H1 (cell line): ENCODE measurements at regions of chr6 and their contacts with region 1.

Region 1: GRCh38 chr6:132259070-132259469 is 142.2 kb downstream of the MOXD1 start:
- DNase-seq: no peak
- H3K4me3 ChIP-seq: no peak overlapping the region
- H3K27ac ChIP-seq: no peak overlapping the region
- H3K4me1 ChIP-seq: no peaks in the 10 kb centered on the region
- H3K27me3 ChIP-seq: no peaks in the 10 kb centered on the region
- CTCF ChIP-seq: peak in 2 of 3 experiments; percentile 27 to 33; a peak in 2 of 4 replicates
- EP300 ChIP-seq: no peak
- POLR2A ChIP-seq: no peak
- RAD21 ChIP-seq: peak; percentile 48 to 59

Region 2: DNA sequence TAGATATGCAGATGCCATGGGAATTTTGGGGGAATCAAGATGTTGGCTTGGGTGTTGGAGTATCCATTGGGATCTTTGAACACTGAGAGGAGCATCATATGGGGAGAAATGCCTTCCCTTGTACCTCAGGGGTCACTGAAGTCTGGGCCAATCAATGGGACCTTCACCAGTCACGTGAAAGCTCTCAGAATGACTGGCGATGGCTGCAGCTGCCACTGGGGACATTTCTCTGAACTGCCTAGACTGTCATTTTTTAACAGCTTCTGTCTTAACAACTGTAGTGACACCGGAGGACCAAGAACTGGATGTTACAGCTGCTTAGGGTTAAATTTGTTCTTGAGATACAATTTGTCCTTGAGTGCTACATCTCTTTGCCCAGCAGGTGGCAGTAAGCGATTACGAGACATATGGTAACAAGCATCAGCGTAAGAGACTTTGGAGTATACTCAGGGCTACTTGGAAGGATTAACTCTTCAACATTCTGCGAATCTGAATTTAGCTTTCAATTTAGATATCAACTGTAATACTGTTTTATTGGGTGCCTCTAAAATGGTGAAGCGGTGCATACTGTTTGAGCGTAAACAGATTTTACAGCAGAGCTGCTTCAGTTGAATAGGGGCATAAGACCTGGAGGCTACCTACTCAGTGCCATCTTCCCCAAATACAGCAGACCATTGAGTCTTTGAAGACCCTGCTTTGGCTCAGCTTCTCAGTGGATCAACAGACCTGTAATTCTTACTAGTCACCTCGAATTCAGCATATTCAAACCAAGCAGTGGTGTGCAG is 343.9 kb before region 1 on chr6:
- CTCF ChIA-PET with region 1: interaction called, 12 read pairs
- POLR2A ChIA-PET with region 1: no interaction called
- DNase-seq: no peak
- H3K4me3 ChIP-seq: no peak overlapping the region
- H3K27ac ChIP-seq: no peak overlapping the region
- H3K4me1 ChIP-seq: no peaks in the 10 kb centered on the region
- H3K27me3 ChIP-seq: no peaks in the 10 kb centered on the region
- CTCF ChIP-seq: peak in 2 of 3 experiments; percentile 48 to 71; a peak in 3 of 4 replicates
- EP300 ChIP-seq: no peak
- POLR2A ChIP-seq: peak; percentile 19 to 84; a peak in 2 of 3 replicates
- RAD21 ChIP-seq: peak; percentile 49 to 64

Region 3: DNA sequence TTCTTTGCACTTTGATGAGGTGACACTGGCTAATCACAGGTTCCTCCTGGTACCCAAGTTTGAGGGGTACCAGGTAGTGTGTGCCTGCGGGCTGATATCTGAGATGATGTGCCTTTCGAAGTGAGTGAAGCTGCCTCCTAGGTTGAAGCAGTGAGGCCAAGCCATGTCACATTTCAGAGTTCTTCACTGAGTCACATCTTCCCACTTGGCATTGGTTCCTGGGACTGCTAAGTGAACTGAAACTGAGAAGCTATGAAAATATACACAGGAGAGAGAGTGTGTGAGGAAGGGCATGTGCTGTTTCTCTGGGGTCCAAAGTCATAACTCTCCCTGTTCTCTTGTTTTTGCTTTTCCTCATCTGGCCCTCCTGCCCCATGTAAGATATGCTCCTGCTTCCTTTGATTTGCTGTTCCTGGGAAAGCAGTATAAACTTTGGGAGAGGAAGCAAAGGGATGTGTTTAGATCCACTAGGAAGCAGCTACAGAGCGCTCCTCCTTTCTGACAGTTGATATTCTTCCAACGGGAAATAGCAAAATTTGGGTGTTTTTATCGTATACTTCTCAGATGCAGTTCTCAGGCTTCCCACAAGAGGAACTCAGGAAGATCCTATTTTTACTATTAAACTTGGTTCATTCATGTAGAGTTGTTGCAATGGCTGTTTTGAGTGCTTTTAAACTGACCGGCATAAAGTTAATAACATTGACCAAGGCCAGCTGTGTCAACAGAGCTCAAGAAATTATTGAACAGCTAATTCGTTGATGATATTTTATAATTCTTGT is 11.5 kb before region 1 on chr6:
- CTCF ChIA-PET with region 1: interaction called, 20 read pairs
- POLR2A ChIA-PET with region 1: no interaction called
- DNase-seq: no peak
- H3K4me3 ChIP-seq: no peak overlapping the region
- H3K27ac ChIP-seq: no peak overlapping the region
- H3K4me1 ChIP-seq: peaks cover 0 to 4% (median 0%) of the 10 kb centered on the region in 4 experiments; a peak in 2 of 7 replicates
- H3K27me3 ChIP-seq: no peaks in the 10 kb centered on the region
- CTCF ChIP-seq: peak in 1 of 3 experiments; percentile 8; a peak in 1 of 4 replicates
- EP300 ChIP-seq: no peak
- POLR2A ChIP-seq: no peak
- RAD21 ChIP-seq: no peak

Region 4: GRCh38 chr6:132270726-132271402 is 11.8 kb after region 1 on chr6:
- CTCF ChIA-PET with region 1: interaction called, 68 read pairs
- POLR2A ChIA-PET with region 1: no interaction called
- DNase-seq: no peak
- H3K4me3 ChIP-seq: no peak overlapping the region
- H3K27ac ChIP-seq: no peak overlapping the region
- H3K4me1 ChIP-seq: no peaks in the 10 kb centered on the region
- H3K27me3 ChIP-seq: no peaks in the 10 kb centered on the region
- CTCF ChIP-seq: no peak
- EP300 ChIP-seq: no peak
- POLR2A ChIP-seq: no peak
- RAD21 ChIP-seq: no peak